Activated CD4-positive, alpha-beta memory T cell treated with anti-CD3 and anti-CD28 coated beads for 36 hours (primary cell): ENCODE measurements at regions of chr9 and their contacts with region 1.

Region 1: DNA sequence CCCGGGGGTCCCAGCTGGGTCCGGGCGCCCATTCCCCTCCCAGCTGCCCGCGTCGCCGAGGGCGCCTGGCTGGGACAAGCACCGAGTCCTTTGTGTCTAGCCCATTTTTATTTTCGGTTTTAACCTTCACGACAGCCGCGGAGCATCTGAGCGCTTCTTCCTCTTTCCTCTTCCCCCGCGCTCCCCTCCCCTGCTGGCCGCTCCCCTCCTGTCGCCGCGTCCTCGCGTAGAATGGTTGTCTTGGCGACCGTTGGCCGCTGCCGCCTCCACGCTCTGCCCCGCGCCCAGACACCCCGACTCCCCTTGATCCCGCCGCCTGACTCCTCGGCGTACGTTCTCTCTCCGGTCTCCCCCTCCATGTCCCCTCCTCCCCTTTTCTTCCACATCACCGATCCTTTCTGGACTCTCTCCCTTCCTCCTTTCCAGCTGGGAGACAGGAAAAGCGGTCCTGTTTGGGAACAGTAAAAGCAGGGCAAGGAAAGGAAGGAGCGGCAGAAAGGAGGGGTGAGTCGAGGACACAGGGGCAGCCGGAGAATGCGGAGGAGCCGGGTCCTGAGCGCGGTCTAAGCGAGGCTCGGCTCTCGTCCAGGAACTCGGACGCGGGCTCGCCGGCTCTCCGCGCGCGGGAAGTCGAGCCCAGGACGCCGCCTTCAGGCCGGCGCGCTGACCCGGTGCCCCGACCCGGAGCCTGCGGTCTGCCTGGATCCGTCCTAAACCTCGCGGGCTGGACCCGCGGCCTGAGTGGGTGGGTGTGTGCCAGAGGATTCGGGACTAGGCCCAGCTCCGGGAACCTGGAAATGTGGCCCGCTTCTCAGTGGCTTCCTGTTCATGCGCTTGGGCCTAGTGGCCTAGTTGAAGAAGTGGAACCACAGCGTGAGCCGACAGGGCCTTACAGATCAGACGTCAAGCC is 841 bp downstream of the CDKN2B-AS1 start:
- DNase-seq: peak; percentile 87
- H3K4me3 Mint-ChIP-seq: peak overlapping the region; percentile 86
- H3K27ac Mint-ChIP-seq: peak overlapping the region; percentile 44
- H3K4me1 Mint-ChIP-seq: peaks cover 11% of the 10 kb centered on the region
- H3K27me3 Mint-ChIP-seq: peaks cover 16% of the 10 kb centered on the region

Region 2: DNA sequence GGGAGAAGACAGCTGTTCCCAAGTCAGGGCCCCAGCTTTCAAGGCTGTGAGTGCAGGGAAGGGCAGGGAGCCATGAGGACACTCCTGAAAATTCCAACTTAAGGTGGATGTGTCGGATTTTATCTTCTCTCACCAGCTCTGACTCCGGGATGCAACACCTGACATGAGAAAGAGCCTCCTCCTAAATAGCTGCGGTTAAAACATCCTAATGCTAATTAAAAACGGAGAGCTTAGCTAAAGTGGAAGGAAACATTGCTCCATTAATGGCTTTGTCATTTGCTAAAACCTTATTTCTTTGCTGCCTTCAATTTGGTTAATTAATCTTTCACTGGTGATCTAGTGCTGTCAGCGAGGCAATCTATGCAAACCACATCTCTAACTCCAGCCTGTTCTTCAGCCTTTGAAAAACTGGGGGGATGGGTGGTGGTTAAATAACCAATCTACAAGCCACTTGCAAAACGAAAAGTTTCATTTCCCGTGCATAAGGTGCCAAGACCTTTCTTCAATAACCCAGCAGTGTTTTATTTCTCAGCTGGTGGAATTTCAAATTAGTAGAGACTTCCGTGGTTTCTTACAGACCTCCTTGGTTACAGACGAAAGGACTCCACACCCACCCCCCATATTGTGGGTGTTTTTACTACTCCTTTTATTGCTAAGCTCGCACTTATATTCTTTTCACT is 1752.8 kb before region 1 on chr9:
- CTCF ChIA-PET with region 1: no interaction called
- POLR2A ChIA-PET with region 1: no interaction called
- intact Hi-C with region 1: no loop called
- DNase-seq: peak; percentile 30
- H3K4me3 Mint-ChIP-seq: peak overlapping the region; percentile 18
- H3K27ac Mint-ChIP-seq: no peak overlapping the region
- H3K4me1 Mint-ChIP-seq: peaks cover 46% of the 10 kb centered on the region
- H3K27me3 Mint-ChIP-seq: peaks cover 7% of the 10 kb centered on the region

Region 3: GRCh38 chr9:21965401-21965951 is 30.0 kb before region 1 on chr9:
- CTCF ChIA-PET with region 1: interaction called, 3 read pairs
- POLR2A ChIA-PET with region 1: no interaction called
- intact Hi-C with region 1: loop called (anchors 2 kb)
- DNase-seq: peak; percentile 71
- H3K4me3 Mint-ChIP-seq: peak overlapping the region; percentile 54
- H3K27ac Mint-ChIP-seq: no peak overlapping the region
- H3K4me1 Mint-ChIP-seq: peaks cover 22% of the 10 kb centered on the region
- H3K27me3 Mint-ChIP-seq: peaks cover 84% of the 10 kb centered on the region

Region 4: DNA sequence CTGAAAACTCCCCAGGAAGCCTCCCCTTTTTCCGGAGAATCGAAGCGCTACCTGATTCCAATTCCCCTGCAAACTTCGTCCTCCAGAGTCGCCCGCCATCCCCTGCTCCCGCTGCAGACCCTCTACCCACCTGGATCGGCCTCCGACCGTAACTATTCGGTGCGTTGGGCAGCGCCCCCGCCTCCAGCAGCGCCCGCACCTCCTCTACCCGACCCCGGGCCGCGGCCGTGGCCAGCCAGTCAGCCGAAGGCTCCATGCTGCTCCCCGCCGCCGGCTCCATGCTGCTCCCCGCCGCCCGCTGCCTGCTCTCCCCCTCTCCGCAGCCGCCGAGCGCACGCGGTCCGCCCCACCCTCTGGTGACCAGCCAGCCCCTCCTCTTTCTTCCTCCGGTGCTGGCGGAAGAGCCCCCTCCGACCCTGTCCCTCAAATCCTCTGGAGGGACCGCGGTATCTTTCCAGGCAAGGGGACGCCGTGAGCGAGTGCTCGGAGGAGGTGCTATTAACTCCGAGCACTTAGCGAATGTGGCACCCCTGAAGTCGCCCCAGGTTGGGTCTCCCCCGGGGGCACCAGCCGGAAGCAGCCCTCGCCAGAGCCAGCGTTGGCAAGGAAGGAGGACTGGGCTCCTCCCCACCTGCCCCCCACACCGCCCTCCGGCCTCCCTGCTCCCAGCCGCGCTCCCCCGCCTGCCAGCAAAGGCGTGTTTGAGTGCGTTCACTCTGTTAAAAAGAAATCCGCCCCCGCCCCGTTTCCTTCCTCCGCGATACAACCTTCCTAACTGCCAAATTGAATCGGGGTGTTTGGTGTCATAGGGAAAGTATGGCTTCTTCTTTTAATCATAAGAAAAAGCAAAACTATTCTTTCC is 20.7 kb before region 1 on chr9:
- CTCF ChIA-PET with region 1: interaction called, 4 read pairs
- POLR2A ChIA-PET with region 1: no interaction called
- intact Hi-C with region 1: loop called (anchors 1 kb)
- DNase-seq: peak; percentile 70
- H3K4me3 Mint-ChIP-seq: peak overlapping the region; percentile 75
- H3K27ac Mint-ChIP-seq: no peak overlapping the region
- H3K4me1 Mint-ChIP-seq: peaks cover 13% of the 10 kb centered on the region
- H3K27me3 Mint-ChIP-seq: peaks cover 71% of the 10 kb centered on the region